Mammary epithelial cell (primary cell): ENCODE measurements at regions of chr5 and their contacts with region 1.

Region 1: GRCh38 chr5:97142521-97143254 is at the start of gene LIX1:
- DNase-seq: peak; percentile 8
- H3K4me3 ChIP-seq: no peak within 1 kb of the TSS
- H3K27ac ChIP-seq: no peak within 1 kb of the TSS
- H3K4me1 ChIP-seq: no peaks in the 10 kb centered on the region
- H3K27me3 ChIP-seq: peaks cover 2% of the 10 kb centered on the region
- CTCF ChIP-seq: peak; percentile 54 to 55
- total RNA-seq, gene LIX1: not detected

Region 2: DNA sequence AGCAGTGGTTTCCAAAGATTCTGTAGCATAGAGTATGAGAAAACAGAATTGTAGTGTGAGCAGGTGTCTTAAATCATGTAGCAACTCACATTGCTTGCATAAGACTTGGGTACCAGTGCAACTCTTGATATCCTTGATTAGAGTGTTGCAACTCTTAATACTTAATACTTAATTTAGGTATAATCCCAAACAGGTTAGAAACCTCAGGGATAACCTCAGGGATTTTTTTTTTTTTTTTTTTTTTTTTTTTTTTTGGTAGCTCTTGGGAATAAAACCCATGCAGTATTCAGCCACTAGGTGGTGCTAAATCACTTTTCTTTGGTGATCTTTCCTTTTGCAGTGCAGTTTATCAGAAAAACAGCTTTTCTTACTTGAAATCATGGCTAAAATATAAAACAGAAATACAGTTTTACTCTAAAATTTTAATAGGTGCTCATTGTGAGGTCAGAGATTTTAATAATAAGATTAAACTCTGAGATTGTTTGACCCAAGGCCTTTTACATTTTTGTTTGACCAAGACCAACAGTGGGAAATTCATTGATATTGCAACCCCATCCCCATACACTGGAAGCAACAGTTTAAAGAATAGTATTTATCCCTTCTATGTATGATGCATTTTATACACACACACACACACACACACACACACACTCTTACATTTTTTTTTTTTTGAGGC is 390.2 kb before region 1 on chr5:
- CTCF ChIA-PET with region 1: interaction called, 5 read pairs
- dilution Hi-C with region 1: no loop called
- in situ Hi-C with region 1: no loop called
- intact Hi-C with region 1: loop called (anchors 1 kb)
- DNase-seq: peak; percentile 12
- H3K4me3 ChIP-seq: no peak overlapping the region
- H3K27ac ChIP-seq: no peak overlapping the region
- H3K4me1 ChIP-seq: no peaks in the 10 kb centered on the region
- H3K27me3 ChIP-seq: no peaks in the 10 kb centered on the region
- CTCF ChIP-seq: peak; percentile 54 to 62

Region 3: GRCh38 chr5:96868603-96869371 is 273.9 kb before region 1 on chr5:
- CTCF ChIA-PET with region 1: interaction called, 15 read pairs
- dilution Hi-C with region 1: no loop called
- in situ Hi-C with region 1: no loop called
- intact Hi-C with region 1: loop called (anchors 1 kb)
- DNase-seq: peak; percentile 57
- H3K4me3 ChIP-seq: no peak overlapping the region
- H3K27ac ChIP-seq: no peak overlapping the region
- H3K4me1 ChIP-seq: peaks cover 13% of the 10 kb centered on the region
- H3K27me3 ChIP-seq: no peaks in the 10 kb centered on the region
- CTCF ChIP-seq: peak; percentile 99

Region 4: DNA sequence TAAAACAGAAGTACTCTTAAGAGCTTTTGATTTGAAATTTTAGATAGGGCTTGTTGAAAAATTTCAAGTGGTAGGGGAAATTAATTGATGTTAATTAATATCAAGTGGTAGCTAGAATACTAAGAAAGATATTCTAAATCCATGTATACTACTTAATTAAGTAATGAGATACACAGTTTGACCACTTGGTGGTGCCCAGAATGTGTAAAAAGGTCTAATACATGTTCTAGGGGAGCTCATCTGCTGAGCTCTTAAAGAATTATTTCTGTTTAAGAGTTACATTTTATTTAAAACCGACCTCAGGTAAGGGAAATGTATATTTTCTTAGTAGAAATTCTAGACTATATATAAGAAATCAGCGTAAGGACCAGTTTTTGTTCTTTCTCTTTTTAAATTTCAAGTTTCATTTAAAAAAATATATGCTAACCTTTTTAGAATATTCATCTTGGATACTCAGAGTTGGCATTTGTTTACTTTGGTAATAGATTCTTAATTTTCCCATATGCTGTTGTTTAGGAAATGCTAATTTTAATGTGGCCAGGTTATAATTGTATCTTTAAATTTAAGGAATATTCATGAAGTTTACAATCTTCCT is 145.3 kb before region 1 on chr5:
- CTCF ChIA-PET with region 1: interaction called, 5 read pairs
- dilution Hi-C with region 1: no loop called
- in situ Hi-C with region 1: no loop called
- intact Hi-C with region 1: loop called (anchors 1 kb)
- DNase-seq: peak; percentile 25
- H3K4me3 ChIP-seq: no peak overlapping the region
- H3K27ac ChIP-seq: no peak overlapping the region
- H3K4me1 ChIP-seq: no peaks in the 10 kb centered on the region
- H3K27me3 ChIP-seq: no peaks in the 10 kb centered on the region
- CTCF ChIP-seq: peak; percentile 49 to 51

Region 5: GRCh38 chr5:97044052-97044451 is 98.6 kb before region 1 on chr5:
- CTCF ChIA-PET with region 1: no interaction called
- dilution Hi-C with region 1: no loop called
- in situ Hi-C with region 1: no loop called
- intact Hi-C with region 1: loop called (anchors 5 kb)
- DNase-seq: peak; percentile 35
- H3K4me3 ChIP-seq: no peak overlapping the region
- H3K27ac ChIP-seq: no peak overlapping the region
- H3K4me1 ChIP-seq: no peaks in the 10 kb centered on the region
- H3K27me3 ChIP-seq: no peaks in the 10 kb centered on the region
- CTCF ChIP-seq: peak; percentile 37 to 42

Region 6: GRCh38 chr5:97243353-97243752 is 100.7 kb after region 1 on chr5:
- CTCF ChIA-PET with region 1: no interaction called
- dilution Hi-C with region 1: no loop called
- in situ Hi-C with region 1: no loop called
- intact Hi-C with region 1: no loop called
- DNase-seq: no peak
- H3K4me3 ChIP-seq: no peak overlapping the region
- H3K27ac ChIP-seq: no peak overlapping the region
- H3K4me1 ChIP-seq: no peaks in the 10 kb centered on the region
- H3K27me3 ChIP-seq: no peaks in the 10 kb centered on the region
- CTCF ChIP-seq: no peak